ENCODE measurements at regions of chr2 and their contacts with region 1.

Region 1: GRCh38 chr2:36486546-36487044 is 111.4 kb downstream of the FEZ2 start:
- DNase-seq: peak; percentile 82
- ATAC-seq: peak; percentile 32
- H3K4me3 ChIP-seq: no peak overlapping the region
- H3K27ac ChIP-seq: peak overlapping the region; percentile 86
- H3K4me1 ChIP-seq: peaks cover 44% of the 10 kb centered on the region
- H3K27me3 ChIP-seq: no peaks in the 10 kb centered on the region
- CTCF ChIP-seq: no peak
- POLR2A ChIP-seq: no peak
- RAD21 ChIP-seq: no peak

Region 2: GRCh38 chr2:36373149-36373926 is 113.3 kb before region 1 on chr2:
- CTCF ChIA-PET with region 1: no interaction called
- POLR2A ChIA-PET with region 1: no interaction called
- dilution Hi-C with region 1: no loop called
- in situ Hi-C with region 1: no loop called
- intact Hi-C with region 1: loop called (anchors 5 kb)
- DNase-seq: peak; percentile 70
- ATAC-seq: no peak; the same call in 1 of the 2 replicates
- H3K4me3 ChIP-seq: no peak overlapping the region
- H3K27ac ChIP-seq: peak overlapping the region; percentile 1; the same call in 1 of the 2 replicates
- H3K4me1 ChIP-seq: peaks cover 41% of the 10 kb centered on the region
- H3K27me3 ChIP-seq: no peaks in the 10 kb centered on the region
- CTCF ChIP-seq: no peak
- POLR2A ChIP-seq: no peak
- RAD21 ChIP-seq: no peak

Region 3: GRCh38 chr2:36438449-36438977 is 48.1 kb before region 1 on chr2:
- CTCF ChIA-PET with region 1: no interaction called
- POLR2A ChIA-PET with region 1: no interaction called
- dilution Hi-C with region 1: no loop called
- in situ Hi-C with region 1: no loop called
- intact Hi-C with region 1: loop called (anchors 1 kb)
- DNase-seq: peak; percentile 99
- ATAC-seq: peak; percentile 91
- H3K4me3 ChIP-seq: no peak overlapping the region
- H3K27ac ChIP-seq: peak overlapping the region; percentile 67; the same call in 1 of the 2 replicates
- H3K4me1 ChIP-seq: peaks cover 22% of the 10 kb centered on the region
- H3K27me3 ChIP-seq: no peaks in the 10 kb centered on the region
- CTCF ChIP-seq: no peak
- POLR2A ChIP-seq: peak; percentile 28; the same call in 1 of the 2 replicates
- RAD21 ChIP-seq: 0 out of 2 replicates have a peak, but pooled peaks have one; percentile 8

Region 4: DNA sequence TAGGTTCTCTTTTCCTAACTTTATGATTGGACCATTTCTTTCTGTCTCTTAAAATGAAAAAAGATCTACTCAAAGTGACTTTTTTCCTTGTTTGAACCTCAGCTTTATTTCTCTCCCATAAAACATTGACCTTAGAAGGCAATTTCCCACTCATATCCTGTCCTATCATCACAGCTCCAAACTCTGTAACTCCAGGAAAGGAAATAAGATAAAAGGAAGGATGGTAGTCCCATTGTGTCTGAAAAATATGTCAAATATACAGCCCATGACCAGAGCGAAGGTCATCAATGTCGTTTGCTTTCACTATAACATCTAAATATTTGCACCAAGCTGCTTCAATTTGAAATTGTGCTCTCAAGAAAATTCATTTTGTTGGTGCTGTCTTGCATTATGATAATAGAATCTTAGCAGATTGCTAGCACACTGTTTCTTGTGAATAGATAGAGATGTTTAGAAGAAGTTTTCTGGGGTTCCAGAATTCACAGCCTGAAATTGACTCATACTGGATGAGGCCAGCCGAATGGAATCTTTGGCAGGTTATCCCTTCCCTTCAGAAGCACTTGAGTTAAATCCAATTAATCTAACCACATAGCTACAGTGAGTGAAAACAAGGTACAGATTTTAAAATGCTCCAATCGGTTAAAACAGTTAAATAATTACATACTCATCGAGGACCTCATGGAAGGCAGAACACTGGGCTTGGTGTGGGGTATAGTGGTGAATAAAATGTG is 36.0 kb before region 1 on chr2:
- CTCF ChIA-PET with region 1: no interaction called
- POLR2A ChIA-PET with region 1: no interaction called
- dilution Hi-C with region 1: no loop called
- in situ Hi-C with region 1: no loop called
- intact Hi-C with region 1: loop called (anchors 2 kb)
- DNase-seq: peak; percentile 89
- ATAC-seq: peak; percentile 40
- H3K4me3 ChIP-seq: no peak overlapping the region
- H3K27ac ChIP-seq: no peak overlapping the region; the same call in 1 of the 2 replicates
- H3K4me1 ChIP-seq: peaks cover 44% of the 10 kb centered on the region
- H3K27me3 ChIP-seq: no peaks in the 10 kb centered on the region
- CTCF ChIP-seq: no peak
- POLR2A ChIP-seq: peak; percentile 9; the same call in 1 of the 2 replicates
- RAD21 ChIP-seq: no peak

Region 5: GRCh38 chr2:36456227-36457175 is 30.1 kb before region 1 on chr2:
- CTCF ChIA-PET with region 1: interaction called, 7 read pairs
- POLR2A ChIA-PET with region 1: no interaction called
- dilution Hi-C with region 1: no loop called
- in situ Hi-C with region 1: no loop called
- intact Hi-C with region 1: loop called (anchors 1 kb)
- DNase-seq: peak; percentile 81
- ATAC-seq: peak; percentile 21
- H3K4me3 ChIP-seq: no peak overlapping the region
- H3K27ac ChIP-seq: peak overlapping the region; percentile 83
- H3K4me1 ChIP-seq: peaks cover 45% of the 10 kb centered on the region
- H3K27me3 ChIP-seq: no peaks in the 10 kb centered on the region
- CTCF ChIP-seq: no peak
- POLR2A ChIP-seq: no peak
- RAD21 ChIP-seq: no peak

Region 6: DNA sequence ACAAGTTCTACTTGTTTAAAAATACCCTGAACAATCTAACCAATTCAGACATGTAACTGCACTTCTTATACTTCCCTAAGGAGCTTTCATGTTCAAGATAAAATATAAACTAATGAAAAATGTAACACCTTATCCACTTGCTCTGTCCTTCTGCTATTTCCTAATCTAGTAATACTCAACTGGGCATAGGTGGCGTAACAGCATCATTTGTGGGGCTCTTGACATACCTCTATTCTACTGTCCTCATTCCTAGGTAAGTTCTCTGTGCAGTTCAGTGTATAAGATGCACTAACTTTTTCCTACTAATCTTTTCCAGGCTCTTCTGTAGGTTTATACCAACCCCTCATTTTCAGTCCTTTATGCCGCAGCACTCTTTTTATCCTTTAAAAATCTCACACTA is 801.4 kb after region 1 on chr2:
- CTCF ChIA-PET with region 1: no interaction called
- POLR2A ChIA-PET with region 1: no interaction called
- dilution Hi-C with region 1: no loop called
- in situ Hi-C with region 1: no loop called
- intact Hi-C with region 1: no loop called
- DNase-seq: no peak
- ATAC-seq: no peak
- H3K4me3 ChIP-seq: no peak overlapping the region
- H3K27ac ChIP-seq: no peak overlapping the region
- H3K4me1 ChIP-seq: peaks cover 6% of the 10 kb centered on the region
- H3K27me3 ChIP-seq: no peaks in the 10 kb centered on the region
- CTCF ChIP-seq: no peak
- POLR2A ChIP-seq: no peak
- RAD21 ChIP-seq: 0 out of 2 replicates have a peak, but pooled peaks have one; percentile 12

Measured in IMR-90 (cell line).